Breast epithelium (tissue), 4 donors: ENCODE measurements at regions of chr5 and their contacts with region 1.

Region 1: DNA sequence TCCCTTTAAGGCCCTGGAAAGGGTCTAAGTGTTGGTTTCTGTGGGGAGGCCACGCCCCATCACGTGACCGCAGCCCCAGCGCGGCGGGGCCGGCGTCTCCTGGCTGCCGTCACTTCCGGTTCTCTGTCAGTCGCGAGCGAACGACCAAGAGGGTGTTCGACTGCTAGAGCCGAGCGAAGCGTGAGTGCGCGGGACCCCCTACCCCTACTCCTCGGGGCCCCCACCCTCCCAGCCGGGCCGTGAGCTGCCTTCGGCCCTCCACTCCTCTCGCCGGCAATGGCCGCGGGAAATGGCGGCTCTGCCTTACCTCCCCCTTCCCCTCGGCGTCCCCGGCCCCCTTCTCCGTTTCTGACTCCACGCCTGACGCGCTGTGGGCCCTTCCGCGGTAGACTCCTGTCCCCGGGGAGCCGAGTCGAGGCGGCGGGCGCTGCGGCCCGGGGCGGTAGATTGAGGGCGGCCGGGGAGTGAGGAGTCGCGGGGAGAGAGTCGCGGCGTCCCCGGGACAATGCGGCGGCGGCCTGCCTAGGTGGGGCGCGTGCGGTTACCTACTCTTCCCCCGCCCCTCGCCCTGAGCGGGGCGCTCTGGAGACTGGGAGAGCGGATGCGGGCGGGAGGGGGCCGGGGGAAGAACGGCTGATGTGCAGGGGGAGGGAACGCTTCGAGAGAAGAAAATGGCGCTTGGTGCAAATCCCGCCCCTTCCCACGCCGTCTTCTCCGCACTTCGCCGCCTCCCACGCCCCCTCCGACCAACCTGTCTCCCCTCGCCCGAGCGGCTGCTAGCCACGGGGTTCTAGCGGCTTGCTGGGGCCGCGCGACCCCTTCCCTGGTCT is at the start of gene SUB1:
- DNase-seq: peak; percentile 90 to 91
- H3K4me3 ChIP-seq: peak within 1 kb of the TSS; percentile 89 to 100 (median 99)
- H3K27ac ChIP-seq: peak within 1 kb of the TSS; percentile 98 to 100
- H3K4me1 ChIP-seq: peaks cover 4 to 5% of the 10 kb centered on the region in 2 donors
- H3K27me3 ChIP-seq: no peaks in the 10 kb centered on the region
- CTCF ChIP-seq: no peak
- POLR2A ChIP-seq: peak; percentile 63
- total RNA-seq, gene SUB1: 152 to 230 (median 201) TPM

Region 2: GRCh38 chr5:32489791-32490582 is 95.7 kb before region 1 on chr5:
- intact Hi-C with region 1: loop called (anchors 10 kb)
- DNase-seq: peak; percentile 40 to 74
- H3K4me3 ChIP-seq: no peak overlapping the region
- H3K27ac ChIP-seq: peak overlapping the region in 1 of 2 donors; percentile 4
- H3K4me1 ChIP-seq: no peaks in the 10 kb centered on the region
- H3K27me3 ChIP-seq: no peaks in the 10 kb centered on the region
- CTCF ChIP-seq: peak; percentile 59 to 78 (median 72)
- POLR2A ChIP-seq: no peak

Region 3: GRCh38 chr5:32542216-32543059 is 43.2 kb before region 1 on chr5:
- intact Hi-C with region 1: no loop called
- DNase-seq: no peak
- H3K4me3 ChIP-seq: no peak overlapping the region
- H3K27ac ChIP-seq: no peak overlapping the region
- H3K4me1 ChIP-seq: no peaks in the 10 kb centered on the region
- H3K27me3 ChIP-seq: no peaks in the 10 kb centered on the region
- CTCF ChIP-seq: no peak
- POLR2A ChIP-seq: no peak